HCT116 (cell line): ENCODE measurements at regions of chr1 and their contacts with region 1.

Region 1: DNA sequence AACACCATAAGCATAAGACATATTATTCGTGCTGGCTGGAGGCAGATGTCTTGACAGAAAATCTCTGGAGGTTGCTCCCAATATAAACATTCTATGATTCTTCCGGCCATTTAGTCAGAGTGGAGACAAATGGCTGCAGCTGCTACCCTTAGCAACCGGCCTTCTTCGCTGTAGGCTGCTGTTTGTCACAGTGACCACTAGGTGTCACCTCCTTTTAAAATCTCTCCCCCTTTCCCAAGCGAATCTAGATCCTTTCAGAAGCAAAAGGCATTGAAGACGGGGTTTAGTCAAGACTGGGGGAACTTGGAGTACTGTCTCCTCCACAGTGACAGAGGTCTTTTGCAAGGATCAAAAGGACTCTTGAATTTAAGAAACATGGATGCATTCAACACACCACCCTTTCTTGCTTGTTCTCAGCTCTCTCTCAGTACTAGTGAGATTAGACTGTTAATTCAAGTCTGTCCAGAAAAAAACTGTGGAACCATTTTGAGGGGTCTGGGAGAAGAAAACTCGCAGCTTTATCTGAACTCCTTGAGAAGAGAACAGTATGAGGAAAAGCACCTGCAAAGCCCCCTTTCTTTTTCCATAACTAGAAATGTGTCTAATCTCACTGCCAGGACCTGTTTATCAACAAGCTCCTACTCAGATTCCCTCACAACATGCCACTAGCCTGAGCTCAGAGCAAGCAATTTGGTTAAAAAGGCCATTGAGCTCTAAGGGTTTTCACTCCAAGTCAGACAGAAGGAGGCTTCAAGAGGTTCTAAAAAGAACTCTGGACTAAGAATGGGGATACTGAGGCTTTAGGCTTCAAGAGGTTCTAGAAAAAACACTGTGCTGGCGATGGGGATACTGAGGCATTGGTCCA is 408.3 kb upstream of the PLXNA2 start:
- DNase-seq: peak; percentile 23
- ATAC-seq: peak; percentile 91
- H3K4me3 ChIP-seq: no peak overlapping the region
- H3K27ac ChIP-seq: no peak overlapping the region
- H3K4me1 ChIP-seq: no peaks in the 10 kb centered on the region
- H3K27me3 ChIP-seq: no peaks in the 10 kb centered on the region
- CTCF ChIP-seq: peak; percentile 42 to 80 (median 71); a peak in 5 of 6 replicates
- POLR2A ChIP-seq: no peak
- RAD21 ChIP-seq: peak; percentile 55

Region 2: DNA sequence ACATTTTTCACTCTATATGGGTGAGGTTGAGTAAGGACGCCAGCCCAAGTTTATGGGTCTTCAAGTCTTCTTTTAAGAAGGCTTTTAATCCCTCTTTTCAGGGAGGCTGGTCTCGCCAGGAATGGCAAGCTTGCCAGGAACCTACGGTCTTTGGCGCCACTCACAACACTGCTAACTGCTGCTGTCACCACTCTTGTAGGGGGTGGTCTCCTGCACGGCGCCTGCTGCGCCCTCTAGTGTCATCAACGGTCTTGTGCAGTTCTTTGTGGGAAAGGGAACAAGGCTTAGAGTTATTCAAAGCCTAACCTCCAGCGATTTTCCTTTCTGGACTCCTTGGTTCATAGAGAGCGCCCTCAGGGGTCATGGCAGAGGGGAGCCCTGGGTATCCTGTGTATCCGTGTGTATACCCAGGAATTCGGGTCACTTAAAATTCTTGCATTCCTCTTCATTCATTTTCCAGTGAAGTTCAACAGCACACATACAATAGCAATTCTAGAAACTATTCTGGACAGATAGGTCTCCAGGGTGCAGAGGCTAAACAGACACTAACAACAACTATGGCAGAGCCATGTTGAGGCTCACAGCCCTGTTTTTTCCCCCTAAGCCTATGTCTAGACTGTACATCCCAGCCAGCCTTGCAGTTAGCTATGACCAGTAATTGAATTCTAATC is 538.2 kb after region 1 on chr1:
- CTCF ChIA-PET with region 1: no interaction called
- POLR2A ChIA-PET with region 1: no interaction called
- RAD21 ChIA-PET with region 1: no interaction called
- intact Hi-C with region 1: loop called (anchors 1 kb)
- DNase-seq: peak; percentile 33
- ATAC-seq: peak; percentile 100
- H3K4me3 ChIP-seq: no peak overlapping the region
- H3K27ac ChIP-seq: no peak overlapping the region
- H3K4me1 ChIP-seq: no peaks in the 10 kb centered on the region
- H3K27me3 ChIP-seq: no peaks in the 10 kb centered on the region
- CTCF ChIP-seq: peak; percentile 74 to 84 (median 84)
- POLR2A ChIP-seq: no peak
- RAD21 ChIP-seq: peak; percentile 71

Region 3: DNA sequence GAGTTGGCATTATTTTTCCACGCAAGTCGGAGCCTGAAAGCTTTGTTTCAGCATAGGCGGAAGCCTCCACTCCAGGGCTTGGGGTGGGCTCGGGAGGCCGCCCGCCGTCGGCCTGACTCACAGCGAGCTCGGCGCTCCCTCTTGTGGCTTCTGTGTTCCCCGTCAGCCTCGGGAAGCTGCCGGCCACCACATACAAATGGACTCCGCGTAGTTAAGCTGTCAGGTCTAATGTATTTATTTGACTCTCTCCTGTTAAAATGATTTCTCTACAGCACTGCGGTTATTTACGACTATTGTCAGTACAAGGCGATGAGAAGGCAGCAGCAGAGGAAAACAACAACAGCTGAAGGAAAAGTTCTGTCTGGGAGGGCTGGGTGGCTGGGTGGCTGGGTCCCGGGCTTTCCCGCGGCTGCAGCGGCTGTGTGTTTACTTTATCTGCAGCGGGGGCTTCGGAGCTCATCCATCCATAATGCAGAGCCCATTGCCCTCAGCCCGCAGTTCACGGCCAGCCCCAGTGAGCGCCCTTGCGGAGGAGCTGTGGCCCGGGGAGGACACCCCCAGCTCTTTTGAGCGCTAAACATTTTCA is 555.3 kb after region 1 on chr1:
- CTCF ChIA-PET with region 1: interaction called, 8 read pairs
- POLR2A ChIA-PET with region 1: no interaction called
- RAD21 ChIA-PET with region 1: no interaction called
- intact Hi-C with region 1: loop called (anchors 5 kb)
- DNase-seq: no peak
- ATAC-seq: peak; percentile 88
- H3K4me3 ChIP-seq: no peak overlapping the region
- H3K27ac ChIP-seq: no peak overlapping the region
- H3K4me1 ChIP-seq: no peaks in the 10 kb centered on the region
- H3K27me3 ChIP-seq: peaks cover 51% of the 10 kb centered on the region
- CTCF ChIP-seq: peak; percentile 34 to 62 (median 61); a peak in 5 of 6 replicates
- POLR2A ChIP-seq: no peak
- RAD21 ChIP-seq: peak; percentile 66

Region 4: GRCh38 chr1:209248649-209249279 is 596.2 kb after region 1 on chr1:
- CTCF ChIA-PET with region 1: interaction called, 15 read pairs
- POLR2A ChIA-PET with region 1: no interaction called
- RAD21 ChIA-PET with region 1: no interaction called
- intact Hi-C with region 1: loop called (anchors 1 kb)
- DNase-seq: peak; percentile 59
- ATAC-seq: peak; percentile 89
- H3K4me3 ChIP-seq: no peak overlapping the region
- H3K27ac ChIP-seq: no peak overlapping the region
- H3K4me1 ChIP-seq: no peaks in the 10 kb centered on the region
- H3K27me3 ChIP-seq: no peaks in the 10 kb centered on the region
- CTCF ChIP-seq: peak; percentile 71 to 90 (median 83)
- POLR2A ChIP-seq: no peak
- RAD21 ChIP-seq: peak; percentile 78

Region 5: DNA sequence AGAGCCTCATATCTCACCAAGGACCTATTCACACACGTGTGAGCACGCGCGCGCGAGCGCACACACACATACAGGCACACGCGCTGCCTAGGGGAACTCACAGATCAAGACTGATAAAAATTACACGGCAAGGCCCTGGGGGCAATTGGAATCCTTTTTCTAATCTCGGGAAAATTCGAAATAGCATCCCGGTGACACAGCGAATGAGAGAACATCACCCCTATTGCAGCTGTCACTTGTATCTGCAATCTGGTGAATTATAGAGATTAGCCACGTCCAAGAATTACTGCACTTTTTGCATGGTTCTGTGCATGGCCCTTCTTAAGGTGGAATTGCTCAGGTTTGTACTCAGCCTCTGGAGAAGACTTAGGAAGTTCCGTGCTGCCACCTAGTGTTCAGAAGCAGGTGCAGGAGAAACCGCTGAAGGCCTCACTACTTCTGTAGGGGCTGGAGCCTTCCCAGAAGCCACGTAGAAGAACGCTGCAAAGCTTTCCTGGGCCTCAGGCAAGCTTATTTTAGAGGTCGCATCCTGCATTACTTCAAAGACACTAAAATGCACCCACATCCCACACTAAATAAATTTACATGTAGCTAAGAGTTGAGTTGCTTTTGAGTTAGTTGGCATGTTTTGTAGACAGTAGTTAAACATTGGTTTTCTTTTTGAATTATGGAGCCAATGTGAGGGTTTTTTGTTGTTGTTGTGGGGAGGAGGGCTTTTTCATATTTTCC is 701.7 kb after region 1 on chr1:
- CTCF ChIA-PET with region 1: no interaction called
- POLR2A ChIA-PET with region 1: no interaction called
- RAD21 ChIA-PET with region 1: no interaction called
- intact Hi-C with region 1: loop called (anchors 1 kb)
- DNase-seq: peak; percentile 85
- ATAC-seq: peak; percentile 99
- H3K4me3 ChIP-seq: no peak overlapping the region
- H3K27ac ChIP-seq: no peak overlapping the region
- H3K4me1 ChIP-seq: no peaks in the 10 kb centered on the region
- H3K27me3 ChIP-seq: 0 out of 2 replicates have a peak, but pooled peaks cover 5% of the 10 kb centered on the region
- CTCF ChIP-seq: peak; percentile 76 to 94 (median 89)
- POLR2A ChIP-seq: no peak
- RAD21 ChIP-seq: peak; percentile 85

Region 6: GRCh38 chr1:209513226-209513625 is 860.7 kb after region 1 on chr1:
- CTCF ChIA-PET with region 1: interaction called, 8 read pairs
- POLR2A ChIA-PET with region 1: no interaction called
- RAD21 ChIA-PET with region 1: no interaction called
- intact Hi-C with region 1: loop called (anchors 1 kb)
- DNase-seq: peak; percentile 48
- ATAC-seq: peak; percentile 96
- H3K4me3 ChIP-seq: no peak overlapping the region
- H3K27ac ChIP-seq: no peak overlapping the region
- H3K4me1 ChIP-seq: no peaks in the 10 kb centered on the region
- H3K27me3 ChIP-seq: peaks cover 13% of the 10 kb centered on the region
- CTCF ChIP-seq: peak; percentile 42 to 82 (median 75); a peak in 5 of 6 replicates
- POLR2A ChIP-seq: no peak
- RAD21 ChIP-seq: peak; percentile 78